ENCODE measurements at regions of chr18 and their contacts with region 1.

Region 1: DNA sequence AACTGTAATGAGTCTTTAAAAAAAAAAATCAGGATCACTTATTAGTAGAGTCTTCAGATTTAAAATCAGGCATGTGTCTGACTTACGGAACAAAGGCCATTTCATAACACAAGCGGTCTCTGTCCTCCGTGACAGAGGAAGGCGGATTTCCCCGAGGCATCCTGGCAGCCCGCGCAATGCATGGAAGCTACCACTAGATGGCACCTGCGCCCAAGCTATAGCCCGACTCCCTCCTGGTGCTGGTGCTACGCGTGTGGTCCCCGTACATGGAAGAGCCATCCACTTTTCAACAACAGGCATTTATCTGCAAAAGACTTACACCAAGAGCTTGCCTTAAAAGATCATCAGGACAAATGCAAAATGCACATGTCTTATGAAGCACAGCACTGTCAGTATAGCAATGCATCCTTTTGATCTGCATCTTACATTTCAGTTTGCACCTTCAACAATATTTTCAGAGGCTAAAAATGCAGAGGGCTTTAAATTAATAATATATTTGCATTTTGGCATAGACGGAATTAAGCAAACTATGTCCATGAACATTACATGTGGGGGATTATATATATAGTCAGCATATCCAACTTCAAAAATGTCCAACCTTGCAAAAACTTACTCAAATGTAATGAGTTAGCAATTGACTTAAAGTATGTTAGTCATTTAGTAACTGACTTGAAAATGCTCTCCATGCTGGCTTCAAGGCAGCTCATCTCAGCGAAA is 96.0 kb downstream of the ZNF516 start:
- DNase-seq: peak; percentile 24
- H3K4me3 ChIP-seq: no peak overlapping the region
- CTCF ChIP-seq: peak; percentile 99

Region 2: DNA sequence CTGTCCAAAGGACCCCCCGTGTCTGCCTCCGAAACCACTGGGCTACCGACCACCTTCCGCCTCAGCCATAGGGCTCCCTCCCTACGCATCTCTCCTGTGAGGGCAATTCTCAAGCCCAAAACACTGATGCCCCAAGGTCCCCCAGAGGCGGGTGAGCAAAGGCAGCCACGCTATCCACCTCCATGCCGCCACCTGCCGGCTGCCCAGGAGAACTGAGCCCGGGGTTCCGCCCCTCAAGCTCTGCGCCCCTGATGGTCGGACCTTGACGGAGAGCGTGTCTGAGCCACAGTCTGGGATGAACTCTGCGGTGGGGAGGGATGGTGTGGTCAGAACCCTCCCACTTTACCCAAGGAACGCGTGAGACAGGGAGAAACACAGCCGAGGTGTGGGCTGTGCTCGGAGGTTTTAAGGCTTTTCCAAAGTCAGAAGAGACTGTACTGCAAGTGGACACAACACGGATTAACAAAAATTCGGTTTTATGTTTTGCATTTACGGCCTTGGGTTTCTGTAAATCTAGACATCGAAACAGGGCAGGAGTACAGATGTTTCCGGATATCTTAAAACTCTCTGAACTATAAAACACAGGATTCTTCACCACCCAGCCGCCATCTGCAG is 18.2 kb before region 1 on chr18:
- CTCF ChIA-PET with region 1: interaction called, 13 read pairs
- POLR2A ChIA-PET with region 1: no interaction called
- DNase-seq: no peak
- H3K4me3 ChIP-seq: no peak overlapping the region
- CTCF ChIP-seq: peak; percentile 74

Region 3: DNA sequence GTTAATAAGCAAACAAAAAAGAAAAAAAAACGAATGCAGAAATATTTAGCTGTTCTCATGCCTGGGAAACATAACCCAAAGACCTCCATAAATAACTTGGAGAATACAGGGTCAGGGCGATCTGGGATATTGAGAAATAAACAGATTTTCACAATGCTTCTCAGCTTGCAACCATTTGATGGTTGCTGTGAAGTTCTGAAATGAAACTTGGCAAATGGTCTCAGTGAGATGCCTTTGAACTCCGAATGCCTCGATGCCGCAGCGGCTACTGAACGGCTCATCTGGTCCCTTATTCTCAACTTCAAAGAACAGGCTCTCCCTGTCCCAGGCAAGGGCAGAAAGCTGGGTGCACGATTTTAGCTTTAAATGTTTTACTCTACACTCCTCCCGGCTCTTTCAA is 17.9 kb after region 1 on chr18:
- CTCF ChIA-PET with region 1: interaction called, 15 read pairs
- POLR2A ChIA-PET with region 1: interaction called, 3 read pairs
- DNase-seq: no peak
- H3K4me3 ChIP-seq: no peak overlapping the region
- CTCF ChIP-seq: no peak

Region 4: GRCh38 chr18:76435316-76435989 is 36.4 kb after region 1 on chr18:
- CTCF ChIA-PET with region 1: interaction called, 16 read pairs
- POLR2A ChIA-PET with region 1: no interaction called
- DNase-seq: no peak
- H3K4me3 ChIP-seq: no peak overlapping the region
- CTCF ChIP-seq: no peak

Region 5: GRCh38 chr18:76565238-76566180 is 166.5 kb after region 1 on chr18:
- CTCF ChIA-PET with region 1: no interaction called
- POLR2A ChIA-PET with region 1: no interaction called
- DNase-seq: peak; percentile 85
- H3K4me3 ChIP-seq: peak overlapping the region; percentile 49
- CTCF ChIP-seq: no peak

Region 6: GRCh38 chr18:76620321-76621170 is 221.5 kb after region 1 on chr18:
- CTCF ChIA-PET with region 1: interaction called, 66 read pairs
- POLR2A ChIA-PET with region 1: no interaction called
- DNase-seq: no peak
- H3K4me3 ChIP-seq: peak overlapping the region; percentile 42
- CTCF ChIP-seq: peak; percentile 87

Region 7: DNA sequence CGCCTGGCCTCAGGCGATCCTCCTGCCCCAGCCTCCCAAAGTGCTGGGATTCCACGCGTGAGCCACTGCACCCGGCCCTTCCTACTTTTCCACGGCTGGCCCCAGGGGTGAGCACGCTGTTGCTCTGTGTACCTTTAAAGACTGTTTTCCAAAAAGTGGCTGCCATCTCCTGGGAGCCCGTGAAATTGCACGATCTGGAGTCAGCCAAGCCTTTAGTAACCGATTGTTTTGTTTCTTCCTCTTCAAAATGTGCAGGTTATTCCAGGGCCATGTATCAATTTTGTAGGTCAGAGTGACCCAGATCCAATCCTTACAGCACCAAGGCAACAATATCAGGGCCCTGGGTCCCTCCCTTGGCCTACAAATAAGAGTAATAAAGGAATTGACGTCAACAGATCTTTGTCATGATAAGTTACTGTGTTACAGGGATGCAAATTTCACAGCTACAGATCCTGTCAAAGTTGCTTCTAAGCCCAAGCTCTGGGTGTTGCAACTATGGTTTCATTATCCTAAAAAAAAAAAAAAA is 287.7 kb after region 1 on chr18:
- CTCF ChIA-PET with region 1: interaction called, 139 read pairs
- POLR2A ChIA-PET with region 1: no interaction called
- DNase-seq: no peak
- H3K4me3 ChIP-seq: no peak overlapping the region
- CTCF ChIP-seq: peak; percentile 73

Region 8: GRCh38 chr18:76709659-76710645 is 310.9 kb after region 1 on chr18:
- CTCF ChIA-PET with region 1: interaction called, 176 read pairs
- POLR2A ChIA-PET with region 1: no interaction called
- DNase-seq: no peak
- H3K4me3 ChIP-seq: no peak overlapping the region
- CTCF ChIP-seq: peak; percentile 76

Measured in AG04449 (cell line).